ENCODE measurements at regions of chr11 and their contacts with region 1.

Region 1: GRCh38 chr11:12361682-12362081 is 15.7 kb upstream of the PARVA start:
- DNase-seq: no peak
- H3K4me3 ChIP-seq: no peak overlapping the region
- H3K4me3 Mint-ChIP-seq: peak overlapping the region in 3 of 7 donors; percentile 16 to 61 (median 53)
- H3K27ac ChIP-seq: no peak overlapping the region
- H3K27ac Mint-ChIP-seq: peak overlapping the region; percentile 47 to 96 (median 88)
- H3K4me1 ChIP-seq: peaks cover 55% of the 10 kb centered on the region
- H3K4me1 Mint-ChIP-seq: peaks cover 69 to 82% (median 78%) of the 10 kb centered on the region in 3 donors
- H3K27me3 ChIP-seq: no peaks in the 10 kb centered on the region
- H3K27me3 Mint-ChIP-seq: no peaks in the 10 kb centered on the region

Region 2: DNA sequence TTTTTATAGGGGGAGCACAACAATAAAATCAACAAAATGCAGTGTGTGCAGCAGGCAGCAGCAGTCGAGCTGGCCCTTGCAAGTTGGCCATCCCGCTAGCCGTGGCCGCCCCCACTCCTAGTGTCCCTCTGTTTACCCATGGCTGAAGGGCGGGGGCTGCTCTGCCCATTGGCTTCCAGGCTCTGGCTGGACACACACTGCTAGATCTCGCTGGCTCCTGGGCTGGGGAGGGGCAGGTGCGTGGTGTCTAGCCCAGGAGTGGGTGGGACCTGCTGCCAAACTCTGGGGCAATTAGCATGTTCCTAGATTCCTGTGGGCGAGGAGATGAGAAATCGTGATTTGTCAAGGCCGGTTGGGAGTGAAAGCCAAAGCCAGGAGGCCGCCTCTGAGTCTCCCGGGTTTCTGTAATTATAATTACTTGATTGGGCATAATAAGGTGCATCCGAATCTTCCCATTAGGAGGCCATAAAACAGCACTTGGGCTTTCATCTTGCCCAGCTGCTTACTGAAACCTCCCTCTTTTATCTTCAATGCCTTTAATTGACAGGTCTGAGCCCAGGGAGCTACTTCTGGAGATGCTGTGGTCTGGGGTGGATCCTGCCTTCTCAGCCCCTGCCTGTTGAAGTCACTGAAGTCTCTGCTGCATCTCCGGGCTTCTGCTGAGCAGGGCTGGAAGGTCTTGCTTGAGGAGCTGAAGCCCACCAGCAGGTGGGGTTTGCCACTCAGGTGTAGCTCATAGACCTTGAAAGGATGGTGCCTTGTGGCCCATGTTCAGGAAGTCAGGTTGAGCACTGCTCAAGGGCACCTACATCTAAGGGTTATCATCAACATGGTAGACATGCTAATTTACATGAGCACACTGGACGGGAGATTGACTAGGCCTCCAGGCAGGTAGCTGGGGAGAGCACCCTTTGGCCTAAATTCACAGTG is 308.7 kb before region 1 on chr11:
- CTCF ChIA-PET with region 1: no interaction called
- POLR2A ChIA-PET with region 1: no interaction called
- DNase-seq: no peak
- H3K4me3 ChIP-seq: no peak overlapping the region
- H3K4me3 Mint-ChIP-seq: no peak overlapping the region
- H3K27ac ChIP-seq: no peak overlapping the region
- H3K27ac Mint-ChIP-seq: peak overlapping the region in 3 of 8 donors; percentile 33 to 48 (median 46)
- H3K4me1 ChIP-seq: no peaks in the 10 kb centered on the region
- H3K4me1 Mint-ChIP-seq: peaks cover 3 to 5% (median 5%) of the 10 kb centered on the region in 3 donors
- H3K27me3 ChIP-seq: no peaks in the 10 kb centered on the region
- H3K27me3 Mint-ChIP-seq: no peaks in the 10 kb centered on the region

Region 3: GRCh38 chr11:12377106-12377823 is 15.6 kb after region 1 on chr11 and contains the start of gene PARVA:
- CTCF ChIA-PET with region 1: interaction called, 14 read pairs
- POLR2A ChIA-PET with region 1: interaction called, 8 read pairs
- DNase-seq: no peak
- H3K4me3 ChIP-seq: peak within 1 kb of the TSS; percentile 41
- H3K4me3 Mint-ChIP-seq: peak within 1 kb of the TSS; percentile 77 to 90 (median 85)
- H3K27ac ChIP-seq: no peak within 1 kb of the TSS
- H3K27ac Mint-ChIP-seq: peak within 1 kb of the TSS; percentile 13 to 93 (median 78)
- H3K4me1 ChIP-seq: no peaks in the 10 kb centered on the region
- H3K4me1 Mint-ChIP-seq: peaks cover 14 to 19% (median 17%) of the 10 kb centered on the region in 3 donors
- H3K27me3 ChIP-seq: no peaks in the 10 kb centered on the region
- H3K27me3 Mint-ChIP-seq: peaks cover 22 to 45% of the 10 kb centered on the region in 2 donors
- total RNA-seq, gene PARVA: 0.07 to 0.18 TPM